Heart left ventricle (tissue), 16 donors: ENCODE measurements at regions of chr2 and their contacts with region 1.

Region 1: GRCh38 chr2:181573140-181573736 is 83.7 kb downstream of the CERKL start:
- DNase-seq: no peak
- ATAC-seq: no peak
- H3K4me3 ChIP-seq: no peak overlapping the region
- H3K27ac ChIP-seq: no peak overlapping the region
- H3K4me1 ChIP-seq: no peaks in the 10 kb centered on the region
- H3K27me3 ChIP-seq: peaks cover 0 to 22% (median 0%) of the 10 kb centered on the region in 9 donors
- CTCF ChIP-seq: peak in 9 of 12 donors; percentile 5 to 45 (median 31)
- POLR2A ChIP-seq: no peak

Region 2: GRCh38 chr2:181104512-181105115 is 468.6 kb before region 1 on chr2:
- intact Hi-C with region 1: loop called in 1 of 10 experiments (anchors 10 kb)
- DNase-seq: no peak
- ATAC-seq: peak in 1 of 4 donors; percentile 46
- H3K4me3 ChIP-seq: no peak overlapping the region
- H3K27ac ChIP-seq: no peak overlapping the region
- H3K4me1 ChIP-seq: peaks cover 0 to 16% (median 0%) of the 10 kb centered on the region in 12 donors
- H3K27me3 ChIP-seq: no peaks in the 10 kb centered on the region
- CTCF ChIP-seq: peak; percentile 44 to 73 (median 61)
- POLR2A ChIP-seq: no peak

Region 3: GRCh38 chr2:181474227-181474881 is 98.9 kb before region 1 on chr2:
- intact Hi-C with region 1: no loop called
- DNase-seq: no peak
- ATAC-seq: no peak
- H3K4me3 ChIP-seq: no peak overlapping the region
- H3K27ac ChIP-seq: no peak overlapping the region
- H3K4me1 ChIP-seq: peaks cover 0 to 16% (median 0%) of the 10 kb centered on the region in 12 donors
- H3K27me3 ChIP-seq: no peaks in the 10 kb centered on the region
- CTCF ChIP-seq: no peak
- POLR2A ChIP-seq: no peak

Region 4: GRCh38 chr2:182650704-182651103 is 1077.5 kb after region 1 on chr2:
- intact Hi-C with region 1: loop called in 1 of 10 experiments (anchors 10 kb)
- DNase-seq: no peak
- ATAC-seq: peak in 2 of 4 donors; percentile 53 to 70
- H3K4me3 ChIP-seq: no peak overlapping the region
- H3K27ac ChIP-seq: no peak overlapping the region
- H3K4me1 ChIP-seq: peaks cover 0 to 14% (median 0%) of the 10 kb centered on the region in 12 donors
- H3K27me3 ChIP-seq: no peaks in the 10 kb centered on the region
- CTCF ChIP-seq: peak; percentile 37 to 68 (median 57)
- POLR2A ChIP-seq: no peak